ENCODE measurements at regions of chr19 and their contacts with region 1.

Region 1: DNA sequence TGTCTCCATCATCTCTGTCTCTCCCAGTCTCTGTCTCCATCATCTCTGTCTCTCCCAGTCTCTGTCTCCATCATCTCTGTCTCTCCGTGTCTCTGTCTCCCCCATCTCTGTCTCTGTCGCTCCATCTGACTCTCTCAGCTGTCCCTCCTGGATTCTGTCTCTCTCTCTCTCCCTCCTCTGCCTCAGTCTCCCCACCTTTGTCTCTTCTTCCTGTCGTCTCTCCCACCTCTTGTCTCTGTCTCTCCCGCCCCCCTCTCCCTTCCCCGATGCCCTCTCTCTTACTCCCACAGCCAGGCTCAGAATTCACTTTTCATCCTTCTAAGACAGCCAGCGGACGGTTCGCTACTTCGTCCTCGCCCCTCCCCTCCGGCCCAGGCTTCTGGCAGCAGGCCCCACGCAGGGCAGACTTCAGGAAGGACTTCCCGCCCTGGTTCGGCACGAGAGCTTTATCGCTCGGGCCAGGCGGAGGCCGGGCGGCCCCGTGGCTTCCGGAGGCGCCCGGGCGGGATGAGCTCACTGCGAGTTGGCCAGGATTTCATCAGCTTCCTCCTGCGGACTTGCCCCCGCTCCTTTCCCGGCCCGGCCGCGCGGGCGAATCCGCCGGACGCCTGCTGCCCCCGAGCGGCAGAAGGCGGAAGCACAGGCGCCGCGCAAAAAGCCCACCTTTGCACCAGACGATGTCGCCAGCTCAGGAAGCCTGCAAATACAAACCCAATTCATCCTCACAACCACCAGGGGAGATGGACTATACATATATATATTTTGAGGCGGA is 12.4 kb upstream of the CCDC9 start:
- DNase-seq: peak; percentile 97
- H3K4me3 ChIP-seq: peak overlapping the region; percentile 24 to 42 (median 35)
- H3K27ac ChIP-seq: peak overlapping the region; percentile 84 to 88 (median 86)
- H3K4me1 ChIP-seq: peaks cover 0 to 51% (median 43%) of the 10 kb centered on the region in 4 donors
- H3K27me3 ChIP-seq: no peaks in the 10 kb centered on the region
- CTCF ChIP-seq: peak; percentile 97 to 99 (median 98)
- EP300 ChIP-seq: peak in 2 of 4 donors; percentile 45 to 73
- POLR2A ChIP-seq: no peak

Region 2: GRCh38 chr19:47047763-47048405 is 196.1 kb before region 1 on chr19:
- intact Hi-C with region 1: loop called (anchors 10 kb)
- DNase-seq: peak; percentile 93
- H3K4me3 ChIP-seq: peak overlapping the region; percentile 91 to 97 (median 96)
- H3K27ac ChIP-seq: peak overlapping the region; percentile 87 to 96 (median 91)
- H3K4me1 ChIP-seq: peaks cover 0 to 13% (median 3%) of the 10 kb centered on the region in 4 donors
- H3K27me3 ChIP-seq: no peaks in the 10 kb centered on the region
- CTCF ChIP-seq: no peak
- EP300 ChIP-seq: no peak
- POLR2A ChIP-seq: peak in 1 of 2 donors; percentile 10

Region 3: DNA sequence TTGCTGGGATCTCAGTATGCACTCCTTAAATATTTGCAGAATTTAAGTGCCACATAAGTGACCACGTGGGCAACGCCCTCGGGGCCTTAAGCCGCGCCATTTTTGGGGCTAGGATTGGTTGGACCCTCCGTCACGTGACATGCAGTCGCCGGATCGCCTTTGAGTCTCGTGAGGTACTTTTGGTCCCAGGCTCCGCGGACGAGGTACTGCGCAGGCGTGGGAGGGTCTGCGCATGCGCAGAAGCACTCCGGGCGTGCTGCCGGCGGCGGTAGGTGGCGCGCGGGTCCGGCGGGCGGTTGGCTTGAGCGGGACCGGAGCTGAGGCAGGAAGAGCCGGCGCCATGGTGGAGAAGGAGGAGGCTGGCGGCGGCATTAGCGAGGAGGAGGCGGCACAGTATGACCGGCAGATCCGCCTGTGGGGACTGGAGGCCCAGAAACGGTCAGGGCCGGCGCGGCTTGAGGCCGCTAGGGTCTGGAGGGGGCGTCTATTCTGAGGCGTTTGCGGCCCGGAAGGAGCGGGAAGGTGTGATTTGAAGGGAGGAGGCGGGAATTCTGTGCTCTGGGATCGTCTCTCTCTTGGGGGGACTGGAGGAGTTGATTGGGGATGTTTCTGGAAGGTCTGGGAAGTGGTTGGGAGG is 113.3 kb before region 1 on chr19 and contains the start of gene SAE1:
- intact Hi-C with region 1: loop called (anchors 5 kb)
- DNase-seq: peak; percentile 98
- H3K4me3 ChIP-seq: peak within 1 kb of the TSS; percentile 71 to 91 (median 81)
- H3K27ac ChIP-seq: peak within 1 kb of the TSS; percentile 92 to 98 (median 96)
- H3K4me1 ChIP-seq: peaks cover 0 to 44% (median 41%) of the 10 kb centered on the region in 4 donors
- H3K27me3 ChIP-seq: no peaks in the 10 kb centered on the region
- CTCF ChIP-seq: peak in 3 of 4 experiments; percentile 17 to 50 (median 36)
- EP300 ChIP-seq: peak in 1 of 4 donors; percentile 67
- POLR2A ChIP-seq: peak; percentile 75 to 84
- total RNA-seq, gene SAE1: 109 to 191 (median 161) TPM

Region 4: GRCh38 chr19:47152224-47153017 is 91.5 kb before region 1 on chr19:
- intact Hi-C with region 1: loop called (anchors 1 kb)
- DNase-seq: no peak
- H3K4me3 ChIP-seq: no peak overlapping the region
- H3K27ac ChIP-seq: peak overlapping the region; percentile 62 to 89 (median 84)
- H3K4me1 ChIP-seq: peaks cover 0 to 88% (median 76%) of the 10 kb centered on the region in 4 donors
- H3K27me3 ChIP-seq: no peaks in the 10 kb centered on the region
- CTCF ChIP-seq: no peak
- EP300 ChIP-seq: peak in 1 of 4 donors; percentile 38
- POLR2A ChIP-seq: no peak

Region 5: DNA sequence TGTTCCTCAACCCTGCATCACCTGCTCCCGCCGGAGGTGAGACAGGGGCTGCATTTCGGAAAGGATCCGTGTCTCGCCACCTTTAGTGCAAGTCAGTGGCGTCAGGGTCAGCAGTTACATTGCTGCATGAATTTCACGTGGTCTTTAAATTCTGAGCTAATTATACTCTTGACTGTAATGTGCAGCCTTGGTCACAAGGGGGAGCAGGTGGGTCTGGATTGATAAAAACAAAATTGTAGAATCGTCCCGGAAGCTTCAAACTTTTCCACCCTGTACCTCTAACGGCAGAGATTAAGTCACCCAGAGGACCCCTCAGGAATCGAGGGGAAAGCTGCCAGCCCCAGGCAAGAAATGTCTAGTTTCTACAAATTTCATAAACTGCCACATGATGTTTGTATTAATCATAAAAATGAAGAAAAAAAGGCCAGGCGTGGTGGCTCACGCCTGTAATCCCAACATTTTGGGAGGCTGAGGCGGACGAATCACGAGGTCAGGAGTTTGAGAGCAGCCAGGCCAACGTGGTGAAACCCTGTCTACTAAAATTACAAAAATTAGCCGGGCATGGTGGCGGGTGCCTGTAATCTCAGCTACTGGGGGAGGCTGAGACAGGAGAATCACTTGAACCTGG is 33.2 kb before region 1 on chr19:
- intact Hi-C with region 1: loop called (anchors 1 kb)
- DNase-seq: peak; percentile 90
- H3K4me3 ChIP-seq: no peak overlapping the region
- H3K27ac ChIP-seq: peak overlapping the region; percentile 67 to 80 (median 75)
- H3K4me1 ChIP-seq: peaks cover 0 to 13% (median 11%) of the 10 kb centered on the region in 4 donors
- H3K27me3 ChIP-seq: no peaks in the 10 kb centered on the region
- CTCF ChIP-seq: peak; percentile 69 to 84 (median 76)
- EP300 ChIP-seq: peak in 1 of 4 donors; percentile 78
- POLR2A ChIP-seq: no peak

Region 6: DNA sequence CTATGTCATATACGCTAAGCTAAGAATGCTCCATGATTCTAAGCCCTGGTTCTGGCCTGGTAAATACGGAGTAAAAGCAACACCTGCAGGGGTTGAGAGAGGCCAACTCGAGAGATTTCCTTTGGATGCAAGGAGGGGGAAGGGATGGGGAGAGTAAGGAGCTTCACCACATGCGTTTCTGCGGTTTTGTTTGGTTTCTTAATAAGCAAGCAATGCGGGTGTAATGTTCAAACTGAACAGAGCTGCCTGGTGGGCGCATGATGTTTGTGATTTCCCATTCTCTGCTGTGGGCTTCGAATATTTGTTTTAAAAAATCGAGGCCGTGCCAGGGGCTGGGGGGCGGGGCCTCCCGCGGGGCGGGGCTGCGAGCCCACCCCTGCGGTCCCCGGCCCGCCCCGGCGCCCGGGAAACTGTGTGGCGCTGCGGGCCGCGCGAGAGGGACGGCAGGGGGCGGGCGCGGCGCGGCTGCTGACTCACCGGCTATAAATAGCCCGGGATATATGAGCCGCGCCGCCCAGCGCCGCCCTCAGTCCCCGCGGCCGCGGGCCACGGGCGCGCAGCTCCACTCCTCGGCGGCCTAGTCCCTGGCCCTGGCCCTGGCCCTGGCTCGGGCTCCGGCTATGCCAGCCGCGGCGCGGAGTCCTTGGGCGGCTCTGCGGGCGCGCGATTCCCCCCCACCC is 18.1 kb before region 1 on chr19:
- intact Hi-C with region 1: loop called (anchors 2 kb)
- DNase-seq: peak; percentile 96
- H3K4me3 ChIP-seq: peak overlapping the region; percentile 46 to 99 (median 87)
- H3K27ac ChIP-seq: peak overlapping the region; percentile 99 to 100 (median 100)
- H3K4me1 ChIP-seq: peaks cover 0 to 49% (median 46%) of the 10 kb centered on the region in 4 donors
- H3K27me3 ChIP-seq: no peaks in the 10 kb centered on the region
- CTCF ChIP-seq: peak in 1 of 4 experiments; percentile 42
- EP300 ChIP-seq: no peak
- POLR2A ChIP-seq: peak; percentile 74 to 83

Measured in sigmoid colon (tissue), 7 donors.